ENCODE measurements at regions of chr7 and their contacts with region 1.

Region 1: GRCh38 chr7:131040467-131040932 is 287.2 kb upstream of the MKLN1 start:
- DNase-seq: no peak
- H3K4me3 ChIP-seq: no peak overlapping the region
- H3K27ac ChIP-seq: peak overlapping the region in 7 of 8 donors; percentile 37 to 61 (median 44)
- H3K4me1 ChIP-seq: peaks cover 32 to 86% (median 55%) of the 10 kb centered on the region in 6 donors
- H3K27me3 ChIP-seq: no peaks in the 10 kb centered on the region
- CTCF ChIP-seq: peak; percentile 81 to 94 (median 89)
- POLR2A ChIP-seq: no peak

Region 2: GRCh38 chr7:130982160-130982638 is 58.3 kb before region 1 on chr7:
- intact Hi-C with region 1: loop called (anchors 10 kb)
- DNase-seq: no peak
- H3K4me3 ChIP-seq: no peak overlapping the region
- H3K27ac ChIP-seq: peak overlapping the region in 7 of 8 donors; percentile 5 to 66 (median 50)
- H3K4me1 ChIP-seq: peaks cover 29 to 95% (median 63%) of the 10 kb centered on the region in 6 donors
- H3K27me3 ChIP-seq: no peaks in the 10 kb centered on the region
- CTCF ChIP-seq: peak; percentile 30 to 75 (median 61)
- POLR2A ChIP-seq: no peak

Measured in spleen (tissue), 13 donors.